Ascending aorta (tissue), 2 donors: ENCODE measurements at regions of chr6 and their contacts with region 1.

Region 1: DNA sequence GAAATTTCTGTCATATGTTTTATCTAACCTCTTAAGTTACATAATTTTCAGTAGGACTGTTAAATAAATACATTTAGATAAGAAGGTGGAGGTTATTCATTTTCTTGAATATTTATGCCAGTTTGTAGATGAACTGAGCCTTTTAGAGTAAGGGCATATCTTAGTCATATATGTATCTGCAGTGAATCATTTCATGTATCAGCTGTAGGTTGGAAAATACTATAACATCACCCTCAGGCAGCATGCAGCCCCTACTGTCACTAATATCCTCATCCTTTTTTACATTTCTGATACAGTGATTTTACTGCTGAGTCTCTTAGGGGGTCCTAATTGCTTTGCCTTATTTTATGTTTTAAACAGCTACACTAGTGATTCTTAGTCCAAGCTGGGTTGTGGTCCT is 19.5 kb upstream of the SUMO4 start:
- DNase-seq: no peak
- H3K4me3 ChIP-seq: no peak overlapping the region
- H3K27ac ChIP-seq: no peak overlapping the region
- H3K4me1 ChIP-seq: peaks cover 0 to 6% of the 10 kb centered on the region in 2 donors
- H3K27me3 ChIP-seq: no peaks in the 10 kb centered on the region
- CTCF ChIP-seq: no peak

Region 2: DNA sequence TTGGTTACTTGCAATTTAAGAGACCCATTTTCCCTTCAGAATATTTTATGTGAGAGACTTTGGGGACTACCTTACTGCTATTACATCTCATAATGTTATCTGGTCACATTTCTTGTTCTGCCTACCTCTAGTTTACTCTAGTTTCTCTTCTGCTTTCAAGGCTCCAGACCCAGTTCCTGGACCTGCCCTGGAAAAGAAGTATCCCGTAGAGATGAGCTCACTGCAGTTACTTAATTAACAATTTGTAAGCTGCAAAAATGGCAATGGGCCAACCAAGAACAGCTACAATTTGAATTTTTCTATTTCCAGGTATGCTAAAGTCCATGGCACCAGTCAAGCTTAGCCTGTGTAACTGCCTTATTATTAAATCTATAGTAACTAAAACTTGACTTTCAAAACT is 38.0 kb before region 1 on chr6:
- intact Hi-C with region 1: loop called (anchors 5 kb)
- DNase-seq: no peak
- H3K4me3 ChIP-seq: no peak overlapping the region
- H3K27ac ChIP-seq: peak overlapping the region in 1 of 2 donors; percentile 11
- H3K4me1 ChIP-seq: peaks cover 0 to 35% of the 10 kb centered on the region in 2 donors
- H3K27me3 ChIP-seq: no peaks in the 10 kb centered on the region
- CTCF ChIP-seq: no peak